ENCODE measurements at regions of chr22 and their contacts with region 1.

Region 1: GRCh38 chr22:30289134-30289979 is at the start of gene CASTOR1:
- DNase-seq: peak; percentile 99
- ATAC-seq: peak; percentile 83
- total RNA-seq, gene CASTOR1: 3.7 to 4.2 TPM

Region 2: GRCh38 chr22:30212363-30212995 is 76.9 kb before region 1 on chr22:
- intact Hi-C with region 1: no loop called
- DNase-seq: peak; percentile 24 to 49
- ATAC-seq: peak; percentile 43

Region 3: GRCh38 chr22:30326706-30327362 is 37.5 kb after region 1 on chr22 and contains the start of gene TBC1D10A:
- intact Hi-C with region 1: loop called in 1 of 2 experiments (anchors 2 kb)
- DNase-seq: peak; percentile 94 to 95
- ATAC-seq: peak; percentile 81
- total RNA-seq, gene TBC1D10A: 32.0 to 41.2 TPM

Region 4: GRCh38 chr22:30357650-30358215 is 68.4 kb after region 1 on chr22:
- intact Hi-C with region 1: loop called in 1 of 2 experiments (anchors 2 kb)
- DNase-seq: no peak
- ATAC-seq: no peak

Region 5: GRCh38 chr22:30386960-30387827 is 97.8 kb after region 1 on chr22 and contains the start of gene RNF215:
- intact Hi-C with region 1: loop called in 1 of 2 experiments (anchors 2 kb)
- DNase-seq: peak; percentile 65 to 82
- ATAC-seq: peak; percentile 89
- total RNA-seq, gene RNF215: 8.7 to 9.5 TPM

Measured in left colon (tissue), 2 donors.